PC-3 (cell line): ENCODE measurements at regions of chr6 and their contacts with region 1.

Region 1: GRCh38 chr6:146968041-146968760 is 236.0 kb upstream of the STXBP5 start:
- DNase-seq: peak; percentile 94
- ATAC-seq: peak; percentile 83
- H3K4me3 ChIP-seq: no peak overlapping the region
- H3K27ac ChIP-seq: no peak overlapping the region
- H3K4me1 ChIP-seq: peaks cover 11% of the 10 kb centered on the region; the same call in 1 of the 2 replicates
- H3K27me3 ChIP-seq: no peaks in the 10 kb centered on the region
- CTCF ChIP-seq: no peak

Region 2: GRCh38 chr6:146913842-146914488 is 54.2 kb before region 1 on chr6:
- CTCF ChIA-PET with region 1: no interaction called
- POLR2A ChIA-PET with region 1: no interaction called
- intact Hi-C with region 1: loop called (anchors 2 kb)
- DNase-seq: peak; percentile 93
- ATAC-seq: peak; percentile 76
- H3K4me3 ChIP-seq: peak overlapping the region; percentile 58
- H3K27ac ChIP-seq: peak overlapping the region; percentile 98
- H3K4me1 ChIP-seq: peaks cover 41% of the 10 kb centered on the region
- H3K27me3 ChIP-seq: no peaks in the 10 kb centered on the region
- CTCF ChIP-seq: no peak